ENCODE measurements at regions of chr9 and their contacts with region 1.

Region 1: GRCh38 chr9:72271613-72272478 is 93.2 kb downstream of the ZFAND5 start:
- H3K4me3 Mint-ChIP-seq: no peak overlapping the region
- H3K27ac Mint-ChIP-seq: no peak overlapping the region
- H3K4me1 Mint-ChIP-seq: peaks cover 12% of the 10 kb centered on the region
- H3K27me3 Mint-ChIP-seq: peaks cover 4% of the 10 kb centered on the region

Region 2: GRCh38 chr9:71806901-71807307 is 464.9 kb before region 1 on chr9:
- intact Hi-C with region 1: loop called (anchors 2 kb)
- H3K4me3 Mint-ChIP-seq: no peak overlapping the region
- H3K27ac Mint-ChIP-seq: no peak overlapping the region
- H3K4me1 Mint-ChIP-seq: no peaks in the 10 kb centered on the region
- H3K27me3 Mint-ChIP-seq: no peaks in the 10 kb centered on the region

Region 3: GRCh38 chr9:73081979-73082657 is 810.3 kb after region 1 on chr9:
- intact Hi-C with region 1: loop called (anchors 10 kb)
- H3K4me3 Mint-ChIP-seq: no peak overlapping the region
- H3K27ac Mint-ChIP-seq: no peak overlapping the region
- H3K4me1 Mint-ChIP-seq: no peaks in the 10 kb centered on the region
- H3K27me3 Mint-ChIP-seq: no peaks in the 10 kb centered on the region